Activated CD8-positive, alpha-beta T cell treated with anti-CD3 and anti-CD28 coated beads for 36 hours (primary cell): ENCODE measurements at regions of chr19 and their contacts with region 1.

Region 1: DNA sequence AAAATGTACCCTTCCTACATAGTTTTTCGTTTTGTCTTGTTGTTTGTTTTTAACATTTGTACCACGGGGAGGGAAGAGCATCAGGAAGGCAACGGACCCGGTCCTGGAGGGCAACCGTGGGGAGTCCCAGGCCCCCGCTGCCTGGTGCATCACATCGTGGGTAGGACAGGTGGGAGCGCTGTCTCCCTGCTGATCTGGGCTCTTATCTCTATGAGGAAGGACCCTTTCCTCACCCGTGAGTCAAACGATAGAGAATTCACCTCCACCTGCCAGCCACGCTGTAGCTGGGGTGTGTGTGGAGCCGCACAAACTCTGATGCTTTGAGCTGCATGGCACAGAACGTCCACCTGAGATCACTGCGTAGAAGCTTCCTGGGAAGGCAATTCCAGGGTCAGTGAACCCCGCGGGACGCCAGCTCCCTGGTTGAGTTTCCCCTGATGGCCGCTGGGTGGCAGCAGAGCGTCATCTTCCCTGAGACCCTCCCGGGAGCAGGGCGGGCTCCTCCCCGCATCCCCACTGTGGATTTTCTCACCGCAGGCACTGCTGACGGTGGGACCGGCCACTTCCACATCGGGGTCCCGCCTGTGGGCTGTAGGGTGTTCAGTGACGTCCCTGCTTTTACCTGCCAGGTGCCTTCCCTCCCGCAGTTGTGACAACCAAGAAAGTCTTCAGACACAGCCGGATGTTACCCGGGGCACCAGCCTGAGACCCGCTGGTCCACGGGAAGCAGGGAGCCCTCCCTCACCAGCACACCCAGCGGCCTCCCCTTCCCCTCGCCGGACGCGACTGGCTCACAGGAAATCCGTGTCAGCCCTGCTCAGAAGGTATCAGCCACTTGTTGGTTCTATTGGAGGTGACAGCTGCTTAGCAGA is 54.7 kb downstream of the ZNF787 start:
- DNase-seq: peak; percentile 65
- ATAC-seq: peak; percentile 84
- H3K4me3 Mint-ChIP-seq: peak overlapping the region; percentile 54
- H3K27ac Mint-ChIP-seq: no peak overlapping the region
- H3K4me1 Mint-ChIP-seq: peaks cover 11% of the 10 kb centered on the region
- H3K27me3 Mint-ChIP-seq: peaks cover 25% of the 10 kb centered on the region
- CTCF ChIP-seq: peak; percentile 99

Region 2: GRCh38 chr19:55947532-55947931 is 118.9 kb before region 1 on chr19 and contains the start of gene NLRP8:
- CTCF ChIA-PET with region 1: no interaction called
- POLR2A ChIA-PET with region 1: no interaction called
- intact Hi-C with region 1: no loop called
- DNase-seq: no peak
- ATAC-seq: no peak
- H3K4me3 Mint-ChIP-seq: no peak within 1 kb of the TSS
- H3K27ac Mint-ChIP-seq: no peak within 1 kb of the TSS
- H3K4me1 Mint-ChIP-seq: no peaks in the 10 kb centered on the region
- H3K27me3 Mint-ChIP-seq: no peaks in the 10 kb centered on the region
- CTCF ChIP-seq: no peak
- total RNA-seq, gene NLRP8: not detected

Region 3: GRCh38 chr19:56080669-56081401 is 14.4 kb after region 1 on chr19:
- CTCF ChIA-PET with region 1: interaction called, 31 read pairs
- POLR2A ChIA-PET with region 1: no interaction called
- intact Hi-C with region 1: no loop called
- DNase-seq: peak; percentile 90
- ATAC-seq: peak; percentile 86
- H3K4me3 Mint-ChIP-seq: peak overlapping the region; percentile 48
- H3K27ac Mint-ChIP-seq: no peak overlapping the region
- H3K4me1 Mint-ChIP-seq: peaks cover 10% of the 10 kb centered on the region
- H3K27me3 Mint-ChIP-seq: peaks cover 13% of the 10 kb centered on the region
- CTCF ChIP-seq: peak; percentile 23

Region 4: DNA sequence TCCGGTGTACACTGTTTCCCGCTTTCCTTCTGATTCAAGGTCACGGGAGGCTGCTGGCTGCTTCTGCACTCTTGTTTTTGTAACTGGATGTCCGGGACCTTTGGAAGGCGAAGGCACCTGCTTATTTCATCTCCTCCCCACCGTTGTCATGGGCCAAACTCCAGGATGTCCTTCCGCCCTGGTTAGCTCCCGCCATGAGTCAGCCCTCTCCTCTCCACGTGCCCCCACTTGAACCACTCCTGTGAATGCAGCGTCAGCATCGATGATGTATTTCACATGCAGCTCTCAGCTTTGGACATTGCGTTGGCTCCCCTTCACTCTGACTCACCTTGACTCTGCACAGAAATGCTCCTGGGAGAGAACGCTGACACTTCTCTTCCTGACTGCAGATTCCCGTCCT is 103.9 kb after region 1 on chr19:
- CTCF ChIA-PET with region 1: interaction called, 15 read pairs
- POLR2A ChIA-PET with region 1: no interaction called
- intact Hi-C with region 1: loop called (anchors 5 kb)
- DNase-seq: no peak
- ATAC-seq: no peak
- H3K4me3 Mint-ChIP-seq: no peak overlapping the region
- H3K27ac Mint-ChIP-seq: no peak overlapping the region
- H3K4me1 Mint-ChIP-seq: peaks cover 3% of the 10 kb centered on the region
- H3K27me3 Mint-ChIP-seq: peaks cover 4% of the 10 kb centered on the region
- CTCF ChIP-seq: no peak

Region 5: DNA sequence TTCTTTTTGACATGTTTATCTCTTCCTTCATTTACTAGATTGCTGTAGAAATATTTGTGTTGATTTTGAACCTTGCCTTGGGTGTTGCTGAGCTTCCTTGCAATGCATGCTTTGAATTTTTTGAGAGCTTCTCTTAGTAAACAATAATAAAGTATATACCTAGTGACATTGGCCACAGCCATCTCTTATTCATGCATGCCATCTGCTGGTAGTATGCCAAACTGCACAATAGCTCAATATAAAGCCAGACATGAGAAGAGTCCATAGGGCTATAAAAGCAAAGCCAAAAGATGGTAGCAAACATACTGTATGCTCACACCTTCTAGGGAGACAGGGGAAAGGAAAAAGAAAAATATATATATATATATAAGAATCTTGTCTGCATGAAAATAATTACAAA is 267.1 kb after region 1 on chr19:
- CTCF ChIA-PET with region 1: interaction called, 22 read pairs
- POLR2A ChIA-PET with region 1: no interaction called
- intact Hi-C with region 1: loop called (anchors 10 kb)
- DNase-seq: peak; percentile 61
- ATAC-seq: peak; percentile 62
- H3K4me3 Mint-ChIP-seq: no peak overlapping the region
- H3K27ac Mint-ChIP-seq: no peak overlapping the region
- H3K4me1 Mint-ChIP-seq: no peaks in the 10 kb centered on the region
- H3K27me3 Mint-ChIP-seq: no peaks in the 10 kb centered on the region
- CTCF ChIP-seq: peak; percentile 60